Activated T-helper 1 cell treated with anti-CD3 and anti-CD28 coated beads, Interleukin-12 subunit alpha, Interleukin-12 subunit beta, Interleukin-2, Interleukin-4 antibody, amounts not matched to agents 30 ng/mL and 10 ng/mL and 1 ng/mL, durations not matched to agents 14 hours and 24 hours and 36 hours (primary cell): ENCODE measurements at regions of chr6 and their contacts with region 1.

Region 1: DNA sequence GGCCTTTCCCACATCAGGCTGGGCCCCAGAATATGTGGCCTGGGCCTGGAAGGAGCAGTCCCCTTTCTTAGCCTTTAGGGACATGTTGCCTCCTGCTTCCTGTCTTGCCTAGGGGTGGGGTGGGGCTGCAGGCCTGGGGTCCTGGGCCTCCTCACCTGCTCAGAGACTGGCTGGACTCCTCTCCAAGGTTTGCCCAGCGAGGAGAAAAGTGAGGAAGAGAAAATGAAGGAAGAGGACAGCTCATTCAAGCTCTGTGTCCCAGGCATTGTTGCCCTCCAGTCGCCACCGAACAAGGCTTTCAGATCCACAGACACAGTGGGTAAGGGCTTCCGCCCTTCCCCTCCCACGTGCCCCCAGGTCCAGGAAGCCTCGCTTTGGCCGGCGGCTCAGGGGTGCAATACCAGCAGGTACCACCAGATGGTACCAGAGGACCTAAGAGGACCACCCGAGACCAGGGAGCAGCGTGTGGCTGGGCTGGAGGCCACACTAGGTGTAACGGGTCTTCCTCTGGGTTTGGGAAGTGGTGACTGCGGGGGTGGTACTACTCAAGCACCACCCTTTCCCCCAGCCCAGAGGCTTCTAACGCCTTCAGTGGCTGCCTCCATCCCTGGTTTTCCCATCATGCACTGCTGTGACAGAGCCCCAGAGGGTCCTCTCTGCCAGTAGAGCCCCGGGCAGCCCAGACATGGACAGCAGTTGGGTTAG is 5.5 kb upstream of the BAK1 start:
- DNase-seq: peak; percentile 85
- H3K4me3 Mint-ChIP-seq: peak overlapping the region; percentile 79
- H3K27ac Mint-ChIP-seq: peak overlapping the region; percentile 94
- H3K4me1 Mint-ChIP-seq: peaks cover 22% of the 10 kb centered on the region
- H3K27me3 Mint-ChIP-seq: no peaks in the 10 kb centered on the region

Region 2: DNA sequence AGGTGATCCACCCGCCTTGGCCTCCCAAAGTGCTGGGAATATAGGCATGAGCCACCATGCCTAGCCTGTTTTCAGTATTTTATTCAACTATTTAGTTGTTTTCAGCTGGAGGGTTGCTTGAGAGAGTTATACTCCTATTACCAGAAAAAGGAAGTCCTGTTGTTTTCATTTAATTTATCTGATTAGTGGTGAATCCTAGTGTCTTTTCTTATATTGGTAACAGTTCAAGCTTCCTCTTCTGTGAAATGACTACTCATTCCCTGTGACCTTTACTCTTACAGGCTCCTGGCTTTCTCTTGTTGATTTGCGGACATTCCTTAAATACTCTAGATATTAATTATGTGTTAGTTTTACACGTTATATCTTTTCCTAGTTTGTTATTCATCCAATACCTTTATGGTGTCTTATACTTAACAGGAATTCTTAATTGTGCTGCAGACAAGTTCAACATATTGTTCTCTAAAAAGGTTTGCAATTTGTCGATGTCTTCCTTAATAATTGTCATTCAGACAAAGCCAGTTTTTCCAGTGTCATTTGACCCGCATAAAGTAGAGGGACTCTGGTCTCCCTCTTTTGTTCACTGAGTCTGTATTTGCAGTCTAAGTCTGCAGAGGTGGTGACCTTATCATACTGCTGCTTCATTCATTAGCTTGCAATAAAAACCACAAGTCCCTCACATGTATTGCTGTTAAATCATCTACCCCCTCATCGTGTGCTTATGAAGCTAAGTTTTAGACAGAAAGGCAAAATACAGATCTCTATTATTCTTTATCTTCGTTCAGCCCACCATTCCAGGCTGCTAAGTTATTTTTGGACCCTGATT is 79.8 kb before region 1 on chr6:
- intact Hi-C with region 1: no loop called
- DNase-seq: no peak
- H3K4me3 Mint-ChIP-seq: no peak overlapping the region
- H3K27ac Mint-ChIP-seq: no peak overlapping the region
- H3K4me1 Mint-ChIP-seq: peaks cover 6% of the 10 kb centered on the region
- H3K27me3 Mint-ChIP-seq: peaks cover 5% of the 10 kb centered on the region

Region 3: DNA sequence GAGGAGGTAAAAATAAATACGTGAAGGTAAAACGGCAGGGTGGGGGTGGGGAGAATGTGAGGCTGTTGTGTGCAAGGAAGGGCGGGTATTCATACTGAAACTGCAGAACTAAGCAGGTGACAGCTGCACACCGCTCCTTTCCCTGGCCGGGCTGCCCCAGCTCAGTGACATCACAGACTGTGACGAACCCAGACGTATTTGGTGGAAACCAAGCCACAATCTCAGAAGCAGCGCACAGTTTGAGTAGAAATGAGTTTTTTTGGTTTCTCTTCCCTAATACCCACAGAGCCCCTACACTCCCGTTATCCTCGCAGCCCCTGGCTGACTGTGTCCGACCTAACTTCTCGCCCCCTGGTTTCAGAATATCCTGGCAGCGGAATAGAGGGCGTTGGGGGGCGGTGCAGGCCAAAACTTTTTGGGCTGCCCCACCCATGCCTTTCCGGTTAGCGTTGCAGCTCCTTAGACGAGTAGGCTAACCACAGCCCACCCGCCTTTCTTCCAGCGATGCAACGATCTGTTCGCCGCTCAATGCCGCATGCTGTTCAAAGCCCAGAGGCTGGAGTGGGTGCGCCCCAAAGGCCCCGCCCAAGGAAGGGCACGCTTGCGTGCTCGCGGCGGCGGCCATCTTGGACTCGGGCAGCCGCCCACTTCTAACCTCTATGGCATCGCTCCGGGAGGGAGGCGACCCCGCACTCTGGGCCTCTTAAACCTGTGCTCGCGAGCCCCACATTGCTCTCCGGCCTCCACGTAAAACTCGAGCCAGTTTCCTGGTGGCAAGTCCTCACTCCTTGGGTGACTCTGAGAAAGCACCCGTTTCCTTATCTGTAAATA is 14.5 kb before region 1 on chr6:
- intact Hi-C with region 1: loop called (anchors 1 kb)
- DNase-seq: peak; percentile 91
- H3K4me3 Mint-ChIP-seq: peak overlapping the region; percentile 83
- H3K27ac Mint-ChIP-seq: peak overlapping the region; percentile 99
- H3K4me1 Mint-ChIP-seq: peaks cover 62% of the 10 kb centered on the region
- H3K27me3 Mint-ChIP-seq: no peaks in the 10 kb centered on the region

Region 4: GRCh38 chr6:33620856-33621710 is 35.5 kb after region 1 on chr6 and contains the start of gene ITPR3:
- intact Hi-C with region 1: loop called (anchors 2 kb)
- DNase-seq: peak; percentile 68
- H3K4me3 Mint-ChIP-seq: peak within 1 kb of the TSS; percentile 96
- H3K27ac Mint-ChIP-seq: peak within 1 kb of the TSS; percentile 90
- H3K4me1 Mint-ChIP-seq: peaks cover 49% of the 10 kb centered on the region
- H3K27me3 Mint-ChIP-seq: no peaks in the 10 kb centered on the region
- total RNA-seq, gene ITPR3: 42.7 and 42.9 TPM in 2 replicates

Region 5: GRCh38 chr6:33652002-33652401 is 66.4 kb after region 1 on chr6:
- intact Hi-C with region 1: no loop called
- DNase-seq: no peak
- H3K4me3 Mint-ChIP-seq: no peak overlapping the region
- H3K27ac Mint-ChIP-seq: no peak overlapping the region
- H3K4me1 Mint-ChIP-seq: peaks cover 22% of the 10 kb centered on the region
- H3K27me3 Mint-ChIP-seq: no peaks in the 10 kb centered on the region

Region 6: GRCh38 chr6:33700391-33701050 is 115.0 kb after region 1 on chr6:
- intact Hi-C with region 1: loop called (anchors 1 kb)
- DNase-seq: peak; percentile 69
- H3K4me3 Mint-ChIP-seq: no peak overlapping the region
- H3K27ac Mint-ChIP-seq: peak overlapping the region; percentile 1
- H3K4me1 Mint-ChIP-seq: peaks cover 31% of the 10 kb centered on the region
- H3K27me3 Mint-ChIP-seq: no peaks in the 10 kb centered on the region

Region 7: DNA sequence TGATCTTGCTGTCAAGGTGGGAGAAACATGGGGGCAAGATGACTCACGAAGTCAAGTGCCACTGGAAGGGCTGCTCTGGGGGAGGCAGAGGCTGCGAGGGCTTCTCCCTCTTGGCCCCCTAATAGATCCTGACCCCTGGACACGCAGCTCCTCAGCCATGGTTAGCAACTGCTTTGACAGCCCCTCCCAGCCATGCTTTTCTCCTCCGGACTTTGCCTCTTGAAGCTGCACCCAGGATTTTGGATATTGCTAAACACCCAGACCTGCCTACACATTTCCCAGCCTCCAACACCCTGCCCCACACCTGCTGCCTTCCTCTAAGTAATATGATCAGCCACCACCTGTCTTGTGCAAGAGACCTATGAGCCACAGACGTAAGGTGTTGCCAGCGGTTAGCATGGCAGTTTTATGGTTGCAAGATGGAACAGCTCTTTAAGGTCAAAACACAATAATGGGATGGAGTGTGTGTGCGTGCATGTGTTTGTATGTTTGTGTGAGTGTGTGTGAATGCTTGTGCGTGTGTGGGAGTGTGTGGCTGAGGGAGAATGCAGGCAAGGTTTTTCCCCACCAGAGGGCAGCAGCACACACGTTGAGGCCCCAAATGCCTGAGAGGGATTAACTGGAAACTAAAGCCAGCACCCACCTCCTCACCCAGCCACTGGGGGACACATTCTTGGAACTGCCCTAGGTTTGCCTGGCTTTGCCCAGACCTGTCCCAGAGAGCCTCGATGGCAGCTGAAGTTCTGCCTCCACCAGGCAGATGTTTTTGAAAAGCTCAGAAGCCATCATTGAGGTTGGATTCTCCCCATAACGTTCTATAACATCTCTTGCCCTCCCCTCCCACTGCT is 158.7 kb after region 1 on chr6:
- intact Hi-C with region 1: loop called (anchors 5 kb)
- DNase-seq: peak; percentile 57
- H3K4me3 Mint-ChIP-seq: no peak overlapping the region
- H3K27ac Mint-ChIP-seq: no peak overlapping the region
- H3K4me1 Mint-ChIP-seq: no peaks in the 10 kb centered on the region
- H3K27me3 Mint-ChIP-seq: peaks cover 22% of the 10 kb centered on the region

Region 8: GRCh38 chr6:34027445-34027936 is 441.9 kb after region 1 on chr6:
- intact Hi-C with region 1: loop called (anchors 5 kb)
- DNase-seq: peak; percentile 46
- H3K4me3 Mint-ChIP-seq: no peak overlapping the region
- H3K27ac Mint-ChIP-seq: no peak overlapping the region
- H3K4me1 Mint-ChIP-seq: no peaks in the 10 kb centered on the region
- H3K27me3 Mint-ChIP-seq: peaks cover 5% of the 10 kb centered on the region